Naive thymus-derived CD8-positive, alpha-beta T cell (primary cell): ENCODE measurements at regions of chr14 and their contacts with region 1.

Region 1: DNA sequence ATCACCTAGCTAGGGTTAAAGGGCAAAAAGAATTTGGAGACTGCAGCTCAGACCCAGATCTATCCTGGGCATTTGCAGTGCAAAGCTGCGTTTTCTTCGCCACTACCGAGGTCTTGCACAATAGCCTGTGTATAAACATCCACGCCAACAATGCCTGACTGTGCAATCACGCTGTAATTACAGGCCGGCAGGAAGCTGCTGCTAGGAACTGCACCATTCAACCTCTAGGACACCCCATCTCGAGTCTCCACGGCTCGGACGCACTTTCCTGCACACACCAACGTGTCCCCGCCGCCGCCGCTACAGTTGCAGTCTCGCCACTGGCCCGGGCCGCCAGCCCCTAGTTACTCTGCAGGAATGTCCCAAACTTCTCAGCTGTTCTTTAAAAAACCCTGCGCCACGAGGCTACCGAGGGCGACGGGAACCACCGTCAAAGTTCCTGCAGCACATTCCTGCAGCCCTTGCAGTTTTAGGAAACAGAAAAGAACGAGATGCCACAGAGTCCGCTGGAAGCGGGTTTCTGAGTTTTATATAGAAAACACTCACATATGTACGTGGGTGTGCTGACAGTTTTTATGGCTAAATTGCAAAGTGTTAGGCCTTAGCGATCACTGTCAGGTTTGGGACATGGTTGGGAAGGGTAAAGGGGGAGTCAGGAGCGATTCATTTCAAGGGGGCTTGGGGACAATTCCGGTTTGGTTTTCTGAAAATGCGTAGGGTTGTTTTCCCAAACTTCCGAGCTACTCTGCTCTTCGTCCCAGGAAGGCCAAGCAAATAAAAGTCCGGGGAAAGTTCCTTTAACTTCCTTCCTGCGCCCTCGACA is 65.5 kb upstream of the PTGR2 start:
- DNase-seq: peak; percentile 37 to 80 (median 56)
- ATAC-seq: peak; percentile 55 to 66
- H3K4me3 Mint-ChIP-seq: peak overlapping the region; percentile 94 to 98 (median 95)
- H3K27ac Mint-ChIP-seq: peak overlapping the region; percentile 79 to 99 (median 96)
- H3K4me1 Mint-ChIP-seq: peaks cover 34 to 69% (median 63%) of the 10 kb centered on the region in 4 donors
- H3K27me3 Mint-ChIP-seq: no peaks in the 10 kb centered on the region

Region 2: GRCh38 chr14:73713803-73714655 is 72.1 kb before region 1 on chr14 and contains the start of gene PNMA1:
- POLR2A ChIA-PET with region 1: interaction called, 23 read pairs
- DNase-seq: peak; percentile 79 to 93 (median 87)
- ATAC-seq: peak; percentile 75 to 77
- H3K4me3 Mint-ChIP-seq: peak within 1 kb of the TSS; percentile 88 to 98 (median 94)
- H3K27ac Mint-ChIP-seq: peak within 1 kb of the TSS; percentile 93 to 99 (median 96)
- H3K4me1 Mint-ChIP-seq: peaks cover 25 to 34% (median 28%) of the 10 kb centered on the region in 4 donors
- H3K27me3 Mint-ChIP-seq: no peaks in the 10 kb centered on the region
- polyA plus RNA-seq, gene PNMA1: 31.6 to 37.2 (median 37.2) TPM

Region 3: GRCh38 chr14:73728717-73729330 is 57.3 kb before region 1 on chr14:
- POLR2A ChIA-PET with region 1: interaction called, 14 read pairs
- DNase-seq: peak; percentile 66 to 91 (median 83)
- ATAC-seq: peak; percentile 90 to 95
- H3K4me3 Mint-ChIP-seq: no peak overlapping the region
- H3K27ac Mint-ChIP-seq: peak overlapping the region; percentile 65 to 91 (median 81)
- H3K4me1 Mint-ChIP-seq: peaks cover 9 to 26% (median 17%) of the 10 kb centered on the region in 4 donors
- H3K27me3 Mint-ChIP-seq: no peaks in the 10 kb centered on the region

Region 4: DNA sequence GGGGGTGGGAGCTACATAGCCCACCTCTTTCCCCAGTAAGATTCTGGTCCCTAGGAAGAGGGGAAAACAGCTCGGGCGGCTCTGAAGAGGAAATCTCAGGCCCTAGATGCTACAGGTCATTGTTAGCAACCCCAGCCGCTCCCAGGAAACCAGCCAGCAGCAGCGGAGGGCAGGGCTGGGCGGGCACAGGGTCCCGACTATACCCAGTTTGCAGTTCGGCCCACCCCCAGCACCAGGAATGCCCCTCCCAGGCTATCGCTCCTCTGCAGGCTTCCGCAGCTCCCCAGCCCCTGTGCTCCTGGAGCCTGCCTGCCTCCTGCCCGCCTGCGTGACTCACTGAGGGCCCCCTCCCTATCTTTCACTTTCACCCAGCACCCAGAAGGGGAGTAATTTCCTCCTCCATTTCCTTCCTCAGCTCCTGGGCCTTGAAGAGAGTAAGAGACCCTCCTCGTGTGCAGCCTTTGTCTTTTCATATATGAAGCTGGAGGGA is 44.7 kb before region 1 on chr14:
- POLR2A ChIA-PET with region 1: interaction called, 103 read pairs
- DNase-seq: peak; percentile 38 to 76 (median 59)
- ATAC-seq: peak; percentile 71 to 72
- H3K4me3 Mint-ChIP-seq: peak overlapping the region; percentile 81 to 94 (median 89)
- H3K27ac Mint-ChIP-seq: peak overlapping the region; percentile 92 to 98 (median 97)
- H3K4me1 Mint-ChIP-seq: peaks cover 38 to 85% (median 72%) of the 10 kb centered on the region in 4 donors
- H3K27me3 Mint-ChIP-seq: no peaks in the 10 kb centered on the region

Region 5: DNA sequence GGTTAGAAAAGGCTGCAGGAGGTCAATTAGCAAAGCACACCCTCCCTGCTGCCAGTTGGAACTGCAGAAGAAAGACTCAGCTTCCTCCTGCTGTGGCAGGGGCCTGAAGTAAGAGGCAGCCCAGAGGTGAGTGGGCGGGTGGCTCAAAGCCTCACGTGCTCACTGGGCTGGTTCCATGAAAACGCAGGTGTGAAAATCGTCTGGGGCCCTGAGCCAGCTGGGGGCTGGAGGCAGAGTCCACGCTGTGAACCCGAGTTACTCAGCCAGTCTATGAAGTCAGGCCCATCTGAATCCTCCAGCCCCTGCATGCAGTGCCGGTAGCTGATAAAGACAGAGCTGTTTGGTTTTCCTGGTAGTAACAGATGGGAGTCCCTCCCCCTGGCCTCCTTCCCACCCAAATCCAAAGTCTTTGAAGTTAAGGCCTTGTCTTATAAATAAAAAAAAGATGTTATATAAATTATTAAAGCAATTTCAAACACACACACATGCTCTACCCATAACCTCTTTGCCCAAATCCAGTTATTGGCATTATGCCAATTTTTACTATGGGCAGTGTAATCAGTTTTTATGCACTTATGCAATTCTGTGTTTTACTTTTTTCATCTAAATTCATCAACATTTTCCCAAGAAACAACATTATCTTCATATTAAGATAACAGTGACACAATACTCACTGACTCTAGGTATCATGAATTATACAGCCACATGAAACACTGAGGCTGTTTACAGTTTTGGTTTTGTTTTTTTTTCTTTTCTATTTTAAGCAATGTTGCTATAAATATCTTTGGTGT is 14.0 kb before region 1 on chr14:
- POLR2A ChIA-PET with region 1: interaction called, 143 read pairs
- DNase-seq: peak in 9 of 10 donors; percentile 44 to 84 (median 65)
- ATAC-seq: peak; percentile 89
- H3K4me3 Mint-ChIP-seq: peak overlapping the region; percentile 43 to 75 (median 70)
- H3K27ac Mint-ChIP-seq: peak overlapping the region; percentile 70 to 97 (median 92)
- H3K4me1 Mint-ChIP-seq: peaks cover 33 to 83% (median 74%) of the 10 kb centered on the region in 4 donors
- H3K27me3 Mint-ChIP-seq: no peaks in the 10 kb centered on the region

Region 6: GRCh38 chr14:73825551-73826188 is 39.6 kb after region 1 on chr14:
- POLR2A ChIA-PET with region 1: interaction called, 18 read pairs
- DNase-seq: peak; percentile 60 to 88 (median 71)
- ATAC-seq: peak; percentile 97 to 99
- H3K4me3 Mint-ChIP-seq: no peak overlapping the region
- H3K27ac Mint-ChIP-seq: peak overlapping the region in 1 of 10 donors; percentile 52
- H3K4me1 Mint-ChIP-seq: peaks cover 0 to 9% (median 2%) of the 10 kb centered on the region in 4 donors
- H3K27me3 Mint-ChIP-seq: no peaks in the 10 kb centered on the region

Region 7: GRCh38 chr14:73851644-73852382 is 65.7 kb after region 1 on chr14 and contains the start of gene PTGR2:
- POLR2A ChIA-PET with region 1: interaction called, 15 read pairs
- DNase-seq: peak; percentile 85 to 97 (median 92)
- ATAC-seq: peak; percentile 92 to 96
- H3K4me3 Mint-ChIP-seq: peak within 1 kb of the TSS; percentile 89 to 98 (median 98)
- H3K27ac Mint-ChIP-seq: peak within 1 kb of the TSS; percentile 92 to 100 (median 99)
- H3K4me1 Mint-ChIP-seq: peaks cover 18 to 26% (median 19%) of the 10 kb centered on the region in 4 donors
- H3K27me3 Mint-ChIP-seq: no peaks in the 10 kb centered on the region
- polyA plus RNA-seq, gene PTGR2: 4.4 to 5.9 (median 5.1) TPM